ENCODE measurements at regions of chr19 and their contacts with region 1.

Region 1: DNA sequence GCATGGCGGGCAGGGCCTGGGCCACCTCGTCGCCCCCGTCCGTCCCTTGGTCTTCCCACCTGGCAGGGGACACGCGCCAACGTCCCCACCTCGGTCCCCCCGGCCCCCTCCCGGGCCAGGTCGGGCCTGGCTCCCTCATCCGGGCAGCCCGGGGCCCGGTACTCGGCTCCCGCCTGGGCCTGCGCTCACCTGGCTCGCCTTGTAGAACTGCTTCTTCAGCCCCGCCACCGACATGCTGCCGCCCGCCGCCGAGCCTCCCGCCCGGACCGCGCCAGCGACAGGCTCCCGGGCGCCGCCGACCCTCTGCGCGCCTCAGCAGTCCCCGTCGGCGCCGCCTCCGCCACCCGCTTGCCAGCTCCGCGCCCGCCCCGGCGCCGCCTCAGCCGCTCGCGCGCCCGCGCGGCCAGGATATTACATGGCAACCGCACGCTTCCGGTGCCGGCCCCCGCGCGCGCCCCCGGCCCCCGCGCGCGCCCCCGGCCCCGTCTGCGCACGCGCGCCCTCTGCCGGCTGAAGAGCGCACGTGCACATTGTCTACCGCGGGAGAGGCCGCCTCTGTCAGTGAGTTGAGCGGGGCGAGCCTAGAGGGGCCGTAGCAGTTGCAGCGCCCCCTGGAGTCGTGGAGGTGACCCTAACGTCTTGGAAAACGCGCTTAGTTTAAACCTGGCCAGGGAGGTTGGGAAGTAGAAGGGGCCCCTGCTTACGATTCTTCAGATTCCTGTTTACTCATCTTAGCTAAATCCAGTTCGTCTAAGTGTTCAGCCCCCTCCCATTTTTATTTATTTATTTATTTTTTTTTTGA is at the start of gene SH3GL1:
- DNase-seq: peak; percentile 71 to 78
- H3K4me3 ChIP-seq: peak within 1 kb of the TSS; percentile 89
- H3K27ac ChIP-seq: no peak within 1 kb of the TSS
- H3K4me1 ChIP-seq: peaks cover 20% of the 10 kb centered on the region
- H3K27me3 ChIP-seq: no peaks in the 10 kb centered on the region
- CTCF ChIP-seq: peak; percentile 81
- total RNA-seq, gene SH3GL1: 45.8 and 49.2 TPM in 2 replicates

Region 2: DNA sequence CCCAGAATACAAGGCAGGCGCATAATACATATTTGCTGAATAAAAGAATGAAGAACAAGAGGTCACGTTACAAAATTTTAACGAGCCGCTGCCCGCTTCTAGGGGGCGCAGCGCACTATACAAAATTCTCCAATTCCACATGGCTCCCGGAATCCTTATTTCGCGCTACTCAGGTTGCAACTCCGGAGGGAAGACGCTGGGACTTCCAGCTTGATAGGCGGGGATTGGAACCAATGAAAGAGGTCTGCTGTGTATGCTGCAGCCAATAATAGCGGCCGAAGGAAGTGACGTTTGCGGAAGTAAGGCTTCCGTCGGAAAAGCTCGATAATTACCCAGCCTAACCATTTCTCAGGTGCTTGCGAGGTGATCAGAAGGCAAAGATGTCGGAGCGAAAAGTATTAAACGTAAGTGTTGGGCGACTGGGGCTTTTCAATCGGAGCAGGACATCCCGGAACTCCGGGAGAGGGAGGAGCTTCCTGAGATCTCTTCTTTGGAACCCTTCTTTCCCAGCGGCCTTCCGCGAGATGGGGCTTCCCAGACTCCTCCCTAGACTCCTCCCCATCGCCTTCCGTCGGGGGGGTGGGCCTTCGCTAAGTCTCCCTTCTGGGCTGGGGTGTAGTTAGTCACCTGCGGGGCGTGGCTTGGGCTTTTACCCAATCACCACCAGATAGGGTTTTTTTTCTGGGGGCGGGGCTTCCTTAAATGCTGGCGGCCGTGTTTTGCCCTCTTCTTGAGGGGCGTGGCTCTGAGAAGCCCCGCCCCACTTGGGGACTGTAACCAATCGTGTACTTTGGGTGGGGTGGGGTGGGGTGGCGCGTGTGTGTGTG is 153.4 kb before region 1 on chr19 and contains the start of gene YJU2:
- CTCF ChIA-PET with region 1: no interaction called
- POLR2A ChIA-PET with region 1: no interaction called
- intact Hi-C with region 1: loop called (anchors 1 kb)
- DNase-seq: peak; percentile 92 to 95
- H3K4me3 ChIP-seq: peak within 1 kb of the TSS; percentile 78
- H3K27ac ChIP-seq: peak within 1 kb of the TSS; percentile 87
- H3K4me1 ChIP-seq: no peaks in the 10 kb centered on the region; the same call in 1 of the 2 replicates
- H3K27me3 ChIP-seq: no peaks in the 10 kb centered on the region
- CTCF ChIP-seq: peak; percentile 49; the same call in 1 of the 2 replicates
- total RNA-seq, gene YJU2: 8.7 and 11.0 TPM in 2 replicates

Region 3: GRCh38 chr19:4295972-4296771 is 104.2 kb before region 1 on chr19:
- CTCF ChIA-PET with region 1: interaction called, 11 read pairs
- POLR2A ChIA-PET with region 1: no interaction called
- intact Hi-C with region 1: no loop called
- DNase-seq: no peak
- H3K4me3 ChIP-seq: no peak overlapping the region
- H3K27ac ChIP-seq: no peak overlapping the region
- H3K4me1 ChIP-seq: no peaks in the 10 kb centered on the region
- H3K27me3 ChIP-seq: no peaks in the 10 kb centered on the region
- CTCF ChIP-seq: no peak

Region 4: GRCh38 chr19:4342615-4343369 is 57.5 kb before region 1 on chr19:
- CTCF ChIA-PET with region 1: no interaction called
- POLR2A ChIA-PET with region 1: interaction called, 9 read pairs
- intact Hi-C with region 1: loop called (anchors 2 kb)
- DNase-seq: peak; percentile 90 to 98
- H3K4me3 ChIP-seq: peak overlapping the region; percentile 61
- H3K27ac ChIP-seq: peak overlapping the region; percentile 56
- H3K4me1 ChIP-seq: no peaks in the 10 kb centered on the region
- H3K27me3 ChIP-seq: no peaks in the 10 kb centered on the region
- CTCF ChIP-seq: no peak

Region 5: GRCh38 chr19:4352701-4353121 is 47.6 kb before region 1 on chr19:
- CTCF ChIA-PET with region 1: no interaction called
- POLR2A ChIA-PET with region 1: no interaction called
- intact Hi-C with region 1: loop called (anchors 1 kb)
- DNase-seq: peak in 1 of 2 experiments; percentile 49
- H3K4me3 ChIP-seq: no peak overlapping the region
- H3K27ac ChIP-seq: no peak overlapping the region
- H3K4me1 ChIP-seq: no peaks in the 10 kb centered on the region
- H3K27me3 ChIP-seq: no peaks in the 10 kb centered on the region
- CTCF ChIP-seq: peak; percentile 87

Region 6: GRCh38 chr19:4369888-4370260 is 30.5 kb before region 1 on chr19:
- CTCF ChIA-PET with region 1: interaction called, 3 read pairs
- POLR2A ChIA-PET with region 1: interaction called, 7 read pairs
- intact Hi-C with region 1: loop called (anchors 1 kb)
- DNase-seq: peak in 1 of 2 experiments; percentile 29
- H3K4me3 ChIP-seq: no peak overlapping the region
- H3K27ac ChIP-seq: no peak overlapping the region
- H3K4me1 ChIP-seq: peaks cover 17% of the 10 kb centered on the region
- H3K27me3 ChIP-seq: no peaks in the 10 kb centered on the region
- CTCF ChIP-seq: no peak

Region 7: DNA sequence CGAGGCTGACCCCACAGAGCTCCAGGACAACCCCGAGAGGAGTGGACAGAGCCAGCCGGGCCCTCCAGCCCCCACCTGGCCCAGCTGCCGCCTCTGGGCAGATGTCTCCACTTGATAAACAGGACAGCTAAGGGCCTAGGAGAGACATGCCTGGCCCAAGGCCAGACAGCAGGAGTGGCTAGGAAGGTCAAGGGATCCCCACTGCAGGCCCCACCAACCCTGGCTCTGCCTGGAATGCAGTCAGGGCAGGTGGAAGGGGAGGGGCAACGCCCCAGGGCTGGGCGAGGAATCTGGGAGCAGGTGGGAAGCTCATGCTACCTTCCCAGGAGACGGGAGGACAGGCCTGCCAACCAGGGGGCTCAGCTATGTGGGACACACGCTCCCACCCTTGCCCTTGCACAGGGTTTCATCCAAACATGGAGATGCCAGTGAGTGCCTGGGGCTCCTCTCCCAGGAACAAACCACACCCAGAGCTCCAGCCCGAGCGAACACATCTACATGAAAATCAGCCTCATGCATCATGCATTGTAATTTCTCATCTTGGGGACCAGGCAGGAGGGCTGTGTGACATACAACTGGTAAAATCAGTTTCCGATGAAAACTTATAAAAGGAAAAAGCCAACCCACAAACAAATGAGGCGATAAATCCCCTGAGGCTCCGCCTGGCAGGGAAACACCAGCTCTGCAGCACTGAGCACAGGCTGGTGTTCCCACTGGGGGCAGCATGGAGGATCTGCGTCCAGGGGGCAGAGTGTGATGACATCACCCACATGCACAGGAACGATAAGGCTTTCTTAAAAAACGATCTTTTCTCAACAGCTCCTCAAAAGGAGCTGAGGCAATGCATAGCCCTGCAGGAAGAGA is 24.9 kb before region 1 on chr19:
- CTCF ChIA-PET with region 1: interaction called, 3 read pairs
- POLR2A ChIA-PET with region 1: no interaction called
- intact Hi-C with region 1: loop called (anchors 1 kb)
- DNase-seq: peak; percentile 92 to 97
- H3K4me3 ChIP-seq: peak overlapping the region; percentile 42; the same call in 1 of the 2 replicates
- H3K27ac ChIP-seq: peak overlapping the region; percentile 95
- H3K4me1 ChIP-seq: peaks cover 68% of the 10 kb centered on the region
- H3K27me3 ChIP-seq: no peaks in the 10 kb centered on the region
- CTCF ChIP-seq: no peak; the same call in 1 of the 2 replicates